ENCODE measurements at regions of chr5 and their contacts with region 1.

Region 1: GRCh38 chr5:17132444-17133083 is 84.9 kb upstream of the BASP1 start:
- DNase-seq: peak; percentile 19
- ATAC-seq: no peak
- H3K4me3 ChIP-seq: no peak overlapping the region
- H3K4me3 Mint-ChIP-seq: no peak overlapping the region
- H3K27ac ChIP-seq: no peak overlapping the region
- H3K27ac Mint-ChIP-seq: no peak overlapping the region
- H3K4me1 ChIP-seq: no peaks in the 10 kb centered on the region
- H3K4me1 Mint-ChIP-seq: peaks cover 3% of the 10 kb centered on the region
- H3K27me3 ChIP-seq: peaks cover 0 to 10% (median 2%) of the 10 kb centered on the region in 4 experiments
- H3K27me3 Mint-ChIP-seq: peaks cover 19% of the 10 kb centered on the region
- CTCF ChIP-seq: peak; percentile 77

Region 2: GRCh38 chr5:17148481-17149246 is 16.1 kb after region 1 on chr5:
- CTCF ChIA-PET with region 1: interaction called, 14 read pairs
- POLR2A ChIA-PET with region 1: no interaction called
- intact Hi-C with region 1: no loop called
- DNase-seq: no peak
- ATAC-seq: no peak
- H3K4me3 ChIP-seq: no peak overlapping the region
- H3K4me3 Mint-ChIP-seq: no peak overlapping the region
- H3K27ac ChIP-seq: no peak overlapping the region
- H3K27ac Mint-ChIP-seq: no peak overlapping the region
- H3K4me1 ChIP-seq: no peaks in the 10 kb centered on the region
- H3K4me1 Mint-ChIP-seq: no peaks in the 10 kb centered on the region
- H3K27me3 ChIP-seq: no peaks in the 10 kb centered on the region
- H3K27me3 Mint-ChIP-seq: no peaks in the 10 kb centered on the region
- CTCF ChIP-seq: no peak

Region 3: GRCh38 chr5:17163221-17163620 is 30.7 kb after region 1 on chr5:
- CTCF ChIA-PET with region 1: no interaction called
- POLR2A ChIA-PET with region 1: no interaction called
- intact Hi-C with region 1: no loop called
- DNase-seq: no peak
- ATAC-seq: no peak
- H3K4me3 ChIP-seq: no peak overlapping the region
- H3K4me3 Mint-ChIP-seq: no peak overlapping the region
- H3K27ac ChIP-seq: no peak overlapping the region
- H3K27ac Mint-ChIP-seq: no peak overlapping the region
- H3K4me1 ChIP-seq: no peaks in the 10 kb centered on the region
- H3K4me1 Mint-ChIP-seq: no peaks in the 10 kb centered on the region
- H3K27me3 ChIP-seq: no peaks in the 10 kb centered on the region
- H3K27me3 Mint-ChIP-seq: peaks cover 8% of the 10 kb centered on the region
- CTCF ChIP-seq: no peak